ENCODE measurements at regions of chr22 and their contacts with region 1.

Region 1: DNA sequence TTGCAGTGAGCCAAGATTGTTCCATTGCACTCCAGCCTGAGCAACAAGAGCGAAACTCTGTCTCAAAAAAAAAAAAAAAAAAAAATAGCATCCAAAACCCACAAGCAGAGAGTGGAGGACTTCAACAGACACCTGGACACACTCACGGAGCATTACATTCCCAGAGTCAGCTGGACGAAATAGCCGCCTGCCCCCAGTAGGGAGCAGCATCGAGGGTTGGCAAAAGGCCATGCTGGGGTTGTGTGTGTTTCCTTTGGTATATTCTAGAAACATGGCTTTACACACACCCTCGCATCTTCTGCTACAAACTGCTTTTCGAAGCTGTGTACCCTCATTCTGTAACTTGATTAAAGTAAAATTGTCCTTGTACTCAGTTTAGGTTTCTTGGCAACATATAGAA is 5.3 kb downstream of the ADA2 start:
- DNase-seq: peak; percentile 31
- H3K4me3 Mint-ChIP-seq: no peak overlapping the region
- H3K27ac Mint-ChIP-seq: no peak overlapping the region
- H3K4me1 Mint-ChIP-seq: peaks cover 50% of the 10 kb centered on the region
- H3K27me3 Mint-ChIP-seq: no peaks in the 10 kb centered on the region

Region 2: DNA sequence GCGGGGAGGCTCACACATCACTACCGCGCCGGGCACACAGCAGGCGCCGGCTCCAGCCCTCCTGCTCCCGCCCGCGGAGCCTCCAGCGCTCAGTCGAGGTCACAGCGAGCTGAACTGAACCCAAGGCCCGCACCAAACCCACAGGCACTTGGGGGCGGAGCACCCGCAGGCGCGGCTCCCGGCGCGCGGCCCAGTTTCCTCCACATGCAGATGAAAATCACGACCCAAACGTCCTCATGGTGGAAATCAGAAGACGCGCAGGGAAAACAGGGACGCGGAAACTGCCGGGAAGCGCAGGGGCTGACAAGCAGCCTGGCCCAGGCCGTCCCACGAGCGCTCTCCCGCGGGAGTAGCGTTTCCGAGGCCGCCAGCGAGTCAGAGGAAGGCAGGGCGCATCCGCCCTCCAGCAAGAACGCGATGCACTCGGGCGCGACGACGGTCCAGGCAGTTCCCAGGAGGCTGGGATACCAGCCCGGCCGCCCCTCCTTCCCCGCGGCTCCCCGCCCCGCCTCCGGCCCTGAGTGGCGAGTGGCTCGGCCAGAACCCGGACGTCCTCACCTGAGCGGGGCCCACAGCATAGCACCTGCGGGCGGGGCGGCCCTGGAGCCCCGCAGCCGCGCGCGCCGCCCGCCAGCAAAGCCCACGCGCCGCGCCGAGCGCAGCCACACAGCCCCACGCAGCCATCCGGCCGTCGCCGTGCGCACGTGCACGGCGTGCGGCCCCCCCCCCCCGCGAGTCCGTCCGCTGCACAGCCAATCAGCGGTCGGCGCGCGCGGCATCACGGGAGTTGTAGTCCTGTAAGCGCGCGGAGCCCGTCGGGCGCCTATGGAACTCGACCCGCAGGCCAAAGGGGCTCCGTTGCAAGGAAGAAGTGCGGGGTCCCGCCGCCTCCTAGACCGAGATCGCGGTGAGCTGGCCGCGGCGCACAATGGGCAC is 55.1 kb before region 1 on chr22 and contains the start of gene HDHD5:
- intact Hi-C with region 1: loop called (anchors 5 kb)
- DNase-seq: peak; percentile 78
- H3K4me3 Mint-ChIP-seq: peak within 1 kb of the TSS; percentile 88
- H3K27ac Mint-ChIP-seq: peak within 1 kb of the TSS; percentile 75
- H3K4me1 Mint-ChIP-seq: peaks cover 25% of the 10 kb centered on the region
- H3K27me3 Mint-ChIP-seq: no peaks in the 10 kb centered on the region
- total RNA-seq, gene HDHD5: 39.1 and 42.1 TPM in 2 replicates

Region 3: GRCh38 chr22:17281440-17281841 is 67.5 kb after region 1 on chr22:
- intact Hi-C with region 1: loop called (anchors 1 kb)
- DNase-seq: peak; percentile 51
- H3K4me3 Mint-ChIP-seq: peak overlapping the region; percentile 77
- H3K27ac Mint-ChIP-seq: peak overlapping the region; percentile 97
- H3K4me1 Mint-ChIP-seq: peaks cover 31% of the 10 kb centered on the region
- H3K27me3 Mint-ChIP-seq: peaks cover 6% of the 10 kb centered on the region

Region 4: GRCh38 chr22:17628304-17629166 is 414.6 kb after region 1 on chr22 and contains the start of gene ATP6V1E1:
- intact Hi-C with region 1: loop called (anchors 5 kb)
- DNase-seq: peak; percentile 95
- H3K4me3 Mint-ChIP-seq: peak within 1 kb of the TSS; percentile 94
- H3K27ac Mint-ChIP-seq: peak within 1 kb of the TSS; percentile 85
- H3K4me1 Mint-ChIP-seq: peaks cover 21% of the 10 kb centered on the region
- H3K27me3 Mint-ChIP-seq: peaks cover 5% of the 10 kb centered on the region
- total RNA-seq, gene ATP6V1E1: 120 and 128 TPM in 2 replicates

Measured in activated T-helper 1 cell treated with anti-CD3 and anti-CD28 coated beads, Interleukin-12 subunit alpha, Interleukin-12 subunit beta, Interleukin-2, Interleukin-4 antibody, amounts not matched to agents 30 ng/mL and 10 ng/mL and 1 ng/mL, durations not matched to agents 14 hours and 24 hours and 36 hours (primary cell).